GM23248 (cell line): ENCODE measurements at regions of chr11 and their contacts with region 1.

Region 1: DNA sequence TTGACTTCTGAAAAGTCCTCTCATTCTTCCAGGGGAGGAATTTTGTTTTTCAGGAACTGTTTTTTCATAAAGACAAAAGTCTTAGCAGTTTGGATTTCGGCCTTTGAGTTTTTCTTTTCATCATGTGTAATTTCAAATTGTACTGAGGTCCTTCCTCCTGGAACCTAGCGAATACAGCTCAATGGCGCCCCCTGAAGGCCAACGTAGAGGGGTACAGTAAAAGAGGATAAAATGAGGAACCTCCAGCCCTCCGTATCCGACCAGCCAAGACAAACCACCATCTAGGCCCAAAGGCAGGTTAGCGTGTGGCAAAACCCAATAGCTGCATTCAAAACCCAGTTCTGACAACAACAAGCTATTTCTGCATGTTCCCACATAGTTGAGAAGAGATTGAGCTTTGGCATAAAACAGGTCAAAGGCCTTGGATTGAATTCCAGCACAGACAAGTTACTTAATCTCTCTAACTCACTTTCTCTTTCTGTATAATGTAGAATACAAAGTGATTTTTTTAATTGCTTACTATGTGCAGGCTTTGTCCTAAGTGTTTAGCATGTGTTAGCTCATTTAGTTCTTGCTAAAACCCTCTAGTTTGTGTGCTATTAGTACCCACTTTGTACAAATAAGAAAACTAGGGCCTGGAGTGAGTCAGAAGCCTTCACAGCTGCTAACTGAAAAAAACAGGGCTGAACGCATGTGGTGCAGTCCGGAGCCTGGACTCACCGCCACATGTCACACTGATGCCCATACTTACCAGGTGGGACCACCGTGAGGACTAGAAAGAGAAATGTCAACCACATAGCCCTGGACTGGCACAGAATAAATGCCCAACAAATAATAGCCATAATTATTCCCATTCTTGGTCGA is 43.2 kb upstream of the ETS1 start:
- DNase-seq: peak; percentile 83
- H3K4me3 ChIP-seq: peak overlapping the region; percentile 24; the same call in 1 of the 2 replicates
- H3K27ac ChIP-seq: no peak overlapping the region
- H3K4me1 ChIP-seq: peaks cover 16% of the 10 kb centered on the region; the same call in 1 of the 2 replicates
- H3K27me3 ChIP-seq: no peaks in the 10 kb centered on the region

Region 2: GRCh38 chr11:128039140-128040021 is 591.2 kb before region 1 on chr11:
- in situ Hi-C with region 1: loop called (anchors 25 kb)
- DNase-seq: peak; percentile 98
- H3K4me3 ChIP-seq: peak overlapping the region; percentile 24; the same call in 1 of the 2 replicates
- H3K27ac ChIP-seq: peak overlapping the region; percentile 70
- H3K4me1 ChIP-seq: peaks cover 38% of the 10 kb centered on the region
- H3K27me3 ChIP-seq: no peaks in the 10 kb centered on the region

Region 3: DNA sequence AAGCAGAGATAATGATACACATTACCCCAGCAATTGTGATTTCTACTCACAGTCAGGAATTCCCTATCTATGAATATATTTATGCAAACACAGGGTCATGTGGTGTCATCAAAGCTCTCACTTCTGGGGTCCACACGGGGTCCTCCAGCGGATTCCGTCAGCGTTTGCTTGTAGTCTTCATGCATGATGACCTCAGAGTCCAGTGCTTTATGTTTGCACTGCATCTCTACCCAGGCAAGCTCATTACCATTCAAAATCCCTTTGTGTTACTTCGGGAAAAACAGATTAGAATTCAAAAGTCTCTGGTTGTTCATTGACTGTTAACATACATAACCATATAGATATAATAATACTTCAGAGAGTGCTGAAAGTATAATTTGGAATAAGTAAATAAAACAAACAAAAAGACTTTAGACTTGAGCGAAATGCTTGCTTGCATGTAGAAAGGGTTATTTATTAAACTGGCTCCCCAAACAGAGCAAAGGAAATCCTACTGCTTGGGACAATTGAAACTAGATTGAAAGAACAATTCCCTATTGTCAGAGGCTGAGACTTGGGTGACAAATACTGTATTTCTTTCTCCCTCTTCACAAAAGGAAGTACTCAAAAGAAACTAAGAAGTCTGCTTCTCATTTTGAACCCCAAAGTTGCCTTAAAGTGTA is 466.4 kb before region 1 on chr11:
- in situ Hi-C with region 1: loop called (anchors 5 kb)
- DNase-seq: no peak
- H3K4me3 ChIP-seq: no peak overlapping the region
- H3K27ac ChIP-seq: no peak overlapping the region
- H3K4me1 ChIP-seq: no peaks in the 10 kb centered on the region
- H3K27me3 ChIP-seq: no peaks in the 10 kb centered on the region

Region 4: GRCh38 chr11:128271401-128271800 is 359.2 kb before region 1 on chr11:
- in situ Hi-C with region 1: no loop called
- DNase-seq: no peak
- H3K4me3 ChIP-seq: no peak overlapping the region
- H3K27ac ChIP-seq: no peak overlapping the region
- H3K4me1 ChIP-seq: peaks cover 8% of the 10 kb centered on the region
- H3K27me3 ChIP-seq: no peaks in the 10 kb centered on the region

Region 5: GRCh38 chr11:128290106-128290840 is 340.3 kb before region 1 on chr11:
- in situ Hi-C with region 1: loop called (anchors 10 kb)
- DNase-seq: peak; percentile 84
- H3K4me3 ChIP-seq: no peak overlapping the region
- H3K27ac ChIP-seq: no peak overlapping the region
- H3K4me1 ChIP-seq: peaks cover 9% of the 10 kb centered on the region
- H3K27me3 ChIP-seq: no peaks in the 10 kb centered on the region

Region 6: DNA sequence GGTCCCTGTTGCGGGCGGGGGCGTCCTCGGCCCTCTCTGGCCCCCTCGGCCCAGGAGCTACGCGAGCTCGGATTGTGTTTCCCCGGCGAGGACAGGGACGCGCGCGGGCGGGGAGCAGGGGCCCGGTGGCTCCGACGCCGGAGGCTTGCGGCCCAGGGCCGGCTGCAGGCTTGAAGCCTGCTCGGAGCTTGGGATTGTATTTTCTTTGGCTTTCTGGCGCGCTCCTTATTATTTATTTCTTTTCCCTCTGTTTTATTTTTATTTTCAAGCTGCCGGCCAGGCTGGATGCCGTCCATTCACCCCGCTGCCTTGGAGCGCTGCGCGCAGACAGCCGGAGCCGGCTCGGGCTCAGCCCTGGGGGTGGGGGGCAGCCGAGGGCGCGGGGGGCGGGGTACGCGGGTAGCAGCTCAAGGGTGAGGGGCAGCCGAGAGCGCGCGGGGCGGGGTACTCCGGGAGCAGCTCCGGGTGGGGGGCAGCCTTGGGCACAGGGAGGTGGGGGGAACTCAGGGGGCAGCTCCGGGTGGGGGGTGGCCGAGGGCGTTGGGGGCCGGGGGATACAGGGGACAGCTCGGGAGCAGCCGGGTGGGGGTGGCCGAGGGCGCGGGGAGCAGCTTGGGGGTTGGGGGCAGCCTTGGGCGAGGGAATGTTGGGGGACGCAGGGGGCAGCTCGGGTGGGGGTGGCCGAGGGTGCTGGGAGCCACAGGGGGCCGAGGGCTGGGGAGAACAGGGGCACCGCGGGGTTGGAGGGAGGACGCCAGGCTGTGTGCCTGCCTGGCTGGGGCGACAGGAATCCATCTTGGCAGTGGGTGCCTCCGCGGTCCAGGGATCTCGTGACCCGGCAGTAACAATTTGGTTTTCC is 193.8 kb after region 1 on chr11:
- in situ Hi-C with region 1: loop called (anchors 10 kb)
- DNase-seq: peak; percentile 39
- H3K4me3 ChIP-seq: peak overlapping the region; percentile 67
- H3K27ac ChIP-seq: no peak overlapping the region
- H3K4me1 ChIP-seq: peaks cover 5% of the 10 kb centered on the region; the same call in 1 of the 2 replicates
- H3K27me3 ChIP-seq: no peaks in the 10 kb centered on the region